ENCODE measurements at regions of chr3 and their contacts with region 1.

Region 1: GRCh38 chr3:32733631-32734229 is 48.7 kb downstream of the CNOT10 start:
- DNase-seq: no peak
- ATAC-seq: no peak
- H3K4me3 ChIP-seq: no peak overlapping the region
- H3K27ac ChIP-seq: no peak overlapping the region
- H3K4me1 ChIP-seq: no peaks in the 10 kb centered on the region
- H3K27me3 ChIP-seq: no peaks in the 10 kb centered on the region

Region 2: DNA sequence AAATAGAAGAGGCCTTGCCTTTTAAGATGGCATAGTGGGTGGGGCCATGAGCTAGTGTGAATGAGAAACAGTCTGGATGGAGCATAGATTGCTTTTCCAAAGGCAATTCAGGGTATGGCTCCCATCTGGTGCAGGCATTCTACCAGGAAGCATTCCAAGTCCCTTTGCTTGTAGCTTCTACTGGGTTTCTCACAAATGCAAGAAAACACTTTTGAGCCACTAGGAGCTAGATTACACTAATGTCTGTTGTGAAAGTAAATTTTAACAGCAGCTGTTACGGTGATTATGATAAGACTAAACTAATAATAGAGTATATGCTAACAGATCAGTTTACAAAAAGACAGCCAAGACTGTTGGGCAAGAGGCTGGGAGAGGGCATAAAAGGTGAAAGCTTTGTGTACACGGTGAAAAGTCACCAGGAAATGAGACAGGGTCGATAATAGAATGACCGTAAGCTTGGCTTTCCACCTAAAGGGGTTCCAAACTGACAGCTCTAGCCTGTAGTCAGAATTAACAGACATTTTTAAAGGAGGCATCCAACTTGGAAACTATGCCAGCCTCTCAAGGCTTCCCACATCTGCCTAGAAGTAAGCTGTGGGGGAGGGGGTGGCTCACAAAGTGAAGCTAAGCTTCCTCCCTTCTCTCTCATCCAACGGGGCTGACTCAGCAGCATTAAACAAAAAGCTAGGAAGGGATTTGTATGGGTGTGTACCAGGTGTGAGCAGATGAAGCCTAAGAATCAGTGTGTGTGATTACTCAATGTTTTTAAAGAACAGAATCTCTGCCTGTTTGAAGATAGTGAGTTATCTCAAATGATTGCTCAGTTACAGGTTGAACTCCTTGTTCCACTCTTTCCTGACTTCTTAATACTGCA is 688.4 kb before region 1 on chr3:
- intact Hi-C with region 1: no loop called
- DNase-seq: peak in 2 of 3 donors; percentile 21 to 57
- ATAC-seq: peak; percentile 87 to 93
- H3K4me3 ChIP-seq: no peak overlapping the region
- H3K27ac ChIP-seq: peak overlapping the region; percentile 90
- H3K4me1 ChIP-seq: peaks cover 3% of the 10 kb centered on the region
- H3K27me3 ChIP-seq: no peaks in the 10 kb centered on the region

Region 3: DNA sequence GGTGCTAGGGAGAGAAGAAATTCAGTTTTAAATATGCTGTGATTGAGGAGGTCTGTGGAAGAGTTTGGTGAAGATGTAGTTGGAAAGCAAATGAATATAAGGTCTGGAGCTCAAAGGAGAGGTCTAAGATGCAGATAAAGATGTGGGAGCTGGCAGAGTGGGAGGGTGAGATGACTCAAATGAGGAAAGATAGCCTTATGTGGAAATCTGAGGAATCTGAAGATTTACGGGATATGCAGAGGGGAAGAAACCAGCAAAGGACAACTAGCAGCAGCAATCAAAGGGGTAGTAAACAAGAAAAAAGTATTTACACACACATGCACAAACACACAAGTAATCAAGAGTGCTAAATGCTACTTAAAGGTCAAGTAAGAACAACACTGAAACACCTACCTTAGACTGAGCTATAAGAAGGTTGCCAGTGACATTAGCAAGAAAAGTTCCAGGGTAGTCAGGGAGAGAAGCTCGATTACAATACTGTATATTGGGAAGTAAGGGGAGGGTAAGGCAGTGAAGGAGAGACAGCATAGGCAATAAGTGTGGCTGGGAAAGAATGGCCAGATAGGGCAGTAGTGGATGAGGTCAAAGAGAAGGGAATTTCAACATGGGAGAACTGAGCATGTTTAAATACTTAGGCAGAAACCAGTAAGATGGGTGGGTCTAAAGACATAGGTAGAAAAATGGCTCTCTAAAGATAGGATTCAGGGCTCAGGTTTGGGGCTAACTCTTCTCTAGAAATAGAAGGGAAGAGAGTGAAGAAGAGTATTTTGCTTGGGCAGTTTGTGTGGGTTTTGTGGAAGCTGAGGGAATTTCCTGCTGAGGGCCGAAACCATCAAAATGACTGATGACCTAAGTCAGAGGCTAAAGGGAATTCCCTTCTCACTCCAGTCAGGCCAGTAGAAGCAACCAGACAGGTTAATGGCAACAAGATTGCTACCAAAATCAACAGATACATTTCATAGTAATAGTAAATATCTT is 240.0 kb before region 1 on chr3:
- intact Hi-C with region 1: no loop called
- DNase-seq: no peak
- ATAC-seq: no peak
- H3K4me3 ChIP-seq: no peak overlapping the region
- H3K27ac ChIP-seq: no peak overlapping the region
- H3K4me1 ChIP-seq: peaks cover 8% of the 10 kb centered on the region
- H3K27me3 ChIP-seq: no peaks in the 10 kb centered on the region

Region 4: DNA sequence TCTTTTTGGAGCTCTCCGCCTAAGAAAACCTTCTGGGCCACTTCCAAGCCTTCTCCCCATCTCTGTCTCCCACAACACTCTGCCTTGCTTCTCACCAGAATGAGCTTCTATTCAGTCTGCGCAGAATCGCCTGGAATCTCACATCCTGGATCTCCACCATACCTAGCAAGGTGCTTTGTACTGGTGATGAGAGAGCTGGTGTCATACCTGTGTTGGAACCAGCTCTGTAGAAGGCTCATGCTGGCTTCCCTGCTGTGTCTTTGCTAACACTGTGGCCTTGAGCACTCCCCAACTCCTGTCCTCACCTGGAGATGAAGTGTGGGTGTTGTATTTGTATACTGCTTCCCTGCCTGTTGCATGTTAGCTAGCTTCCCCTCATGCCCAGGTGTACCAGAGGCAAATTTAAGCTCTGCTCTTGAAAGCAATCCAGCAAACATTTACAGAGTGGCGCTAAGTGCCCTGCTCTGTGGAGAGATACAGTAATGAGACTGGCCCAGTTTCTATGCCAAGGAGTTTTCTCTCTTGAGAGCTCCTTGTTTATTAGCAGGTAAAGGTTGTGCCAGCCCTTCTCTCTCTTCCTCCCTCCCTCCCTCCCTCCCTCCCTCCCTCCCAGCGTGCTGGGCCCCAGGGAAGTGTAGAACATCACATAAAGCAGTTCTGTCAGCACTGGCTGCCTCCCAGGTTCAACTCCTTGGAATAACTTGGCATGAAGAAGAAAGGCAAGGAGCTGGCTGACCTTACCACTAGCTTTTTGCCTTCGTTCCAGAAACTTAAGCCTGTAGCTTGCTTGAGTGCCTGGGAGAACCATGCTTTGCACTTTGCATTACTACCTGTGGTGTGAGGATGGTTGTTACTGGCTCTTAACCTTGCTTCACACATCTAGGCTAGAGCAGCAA is 139.0 kb after region 1 on chr3:
- intact Hi-C with region 1: no loop called
- DNase-seq: peak in 1 of 3 donors; percentile 56
- ATAC-seq: no peak
- H3K4me3 ChIP-seq: no peak overlapping the region
- H3K27ac ChIP-seq: no peak overlapping the region
- H3K4me1 ChIP-seq: no peaks in the 10 kb centered on the region
- H3K27me3 ChIP-seq: no peaks in the 10 kb centered on the region

Region 5: GRCh38 chr3:32934150-32934742 is 200.5 kb after region 1 on chr3:
- intact Hi-C with region 1: loop called in 3 of 4 experiments (anchors 5 to 10 kb)
- DNase-seq: no peak
- ATAC-seq: no peak
- H3K4me3 ChIP-seq: no peak overlapping the region
- H3K27ac ChIP-seq: no peak overlapping the region
- H3K4me1 ChIP-seq: no peaks in the 10 kb centered on the region
- H3K27me3 ChIP-seq: no peaks in the 10 kb centered on the region

Region 6: DNA sequence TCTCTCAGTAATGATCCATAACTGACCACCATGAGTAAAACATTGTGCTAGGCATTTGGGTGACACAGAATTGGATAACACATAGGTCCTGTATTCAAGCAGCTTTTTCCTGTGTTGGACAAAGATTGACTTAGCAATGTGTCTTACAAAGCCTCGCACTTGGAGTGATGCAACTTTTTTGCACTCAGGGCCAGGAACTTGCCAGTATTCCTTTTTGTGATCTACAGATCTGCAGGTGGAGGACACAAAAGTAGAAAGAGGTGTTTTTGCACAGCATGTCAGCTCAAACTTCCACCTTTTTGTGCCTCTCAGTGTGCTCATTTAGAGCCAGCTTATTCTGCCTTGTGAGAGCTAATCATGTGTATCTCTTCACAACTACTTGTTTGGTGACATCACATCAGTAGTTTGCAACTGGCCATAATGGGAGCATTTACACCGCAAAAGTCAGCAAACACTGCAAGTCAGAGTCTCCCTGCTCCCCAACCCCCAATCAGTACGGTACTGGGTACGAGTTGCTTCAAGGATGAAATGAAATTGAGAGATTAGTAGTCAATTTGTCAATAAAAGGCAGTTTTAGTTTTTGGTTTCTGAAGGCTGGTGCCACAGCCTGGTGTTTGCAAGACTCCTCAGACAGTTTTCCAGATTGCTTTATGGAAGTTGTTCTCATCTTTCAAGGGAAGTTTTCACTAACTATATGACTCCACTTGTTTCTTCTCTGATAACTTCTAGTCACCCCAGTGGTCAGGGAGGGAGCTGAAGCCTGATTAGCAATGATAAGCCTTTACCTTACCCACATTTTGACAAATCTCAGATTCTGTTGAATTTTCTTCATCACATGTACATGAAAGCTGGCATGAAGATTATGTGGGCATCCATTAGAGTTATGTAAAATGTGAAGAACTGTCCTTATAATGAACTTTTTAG is 1213.8 kb after region 1 on chr3:
- intact Hi-C with region 1: no loop called
- DNase-seq: no peak
- ATAC-seq: no peak
- H3K4me3 ChIP-seq: no peak overlapping the region
- H3K27ac ChIP-seq: no peak overlapping the region
- H3K4me1 ChIP-seq: no peaks in the 10 kb centered on the region
- H3K27me3 ChIP-seq: no peaks in the 10 kb centered on the region